ENCODE measurements at regions of chr13 and their contacts with region 1.

Region 1: GRCh38 chr13:43132257-43132656 is 108.9 kb downstream of the DNAJC15 start:
- DNase-seq: peak in 1 of 2 experiments; percentile 27
- H3K4me3 ChIP-seq: no peak overlapping the region
- H3K27ac ChIP-seq: no peak overlapping the region
- H3K4me1 ChIP-seq: peaks cover 2 to 13% (median 6%) of the 10 kb centered on the region in 4 experiments; a peak in 5 of 7 replicates
- H3K27me3 ChIP-seq: no peaks in the 10 kb centered on the region; a peak in 1 of 7 replicates
- CTCF ChIP-seq: peak; percentile 24 to 93 (median 70)
- EP300 ChIP-seq: no peak
- POLR2A ChIP-seq: no peak
- RAD21 ChIP-seq: peak; percentile 88 to 92

Region 2: DNA sequence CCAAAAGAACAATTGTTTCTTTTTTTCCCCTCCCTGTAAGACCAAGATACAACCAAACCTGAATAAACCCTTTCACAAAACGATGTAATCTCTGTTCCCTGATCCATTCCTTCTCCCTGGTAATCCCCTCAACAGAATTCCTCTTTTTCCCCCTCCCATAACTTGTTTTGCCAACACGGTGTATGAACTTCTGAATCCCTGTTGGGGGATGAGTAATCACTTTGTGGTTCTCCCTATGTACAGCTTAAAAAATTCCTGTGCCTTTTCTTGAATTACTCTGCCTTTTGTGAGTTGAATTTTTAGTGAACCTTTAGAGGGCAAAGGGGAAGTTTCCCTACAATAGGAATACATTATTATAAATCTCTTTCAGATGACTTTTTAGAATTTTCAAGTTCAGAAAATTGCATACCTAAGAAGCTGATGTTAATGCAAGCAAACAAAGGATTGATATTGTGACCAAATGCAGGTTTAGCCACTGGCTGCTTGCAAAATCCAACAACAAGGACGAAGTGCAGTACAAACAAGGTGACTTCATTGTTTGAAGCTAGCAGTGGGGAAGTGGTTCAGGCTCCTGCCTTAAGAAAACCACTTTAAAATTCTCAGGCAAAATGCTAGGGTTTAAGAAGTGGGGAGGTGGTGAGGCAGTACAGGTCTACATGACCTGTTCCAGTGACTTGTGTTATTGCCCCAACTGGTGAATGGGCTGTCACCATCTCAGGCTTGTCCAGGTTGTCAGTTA is 125.2 kb before region 1 on chr13:
- CTCF ChIA-PET with region 1: no interaction called
- POLR2A ChIA-PET with region 1: no interaction called
- DNase-seq: no peak
- H3K4me3 ChIP-seq: no peak overlapping the region
- H3K27ac ChIP-seq: no peak overlapping the region
- H3K4me1 ChIP-seq: peaks cover 0 to 4% (median 0%) of the 10 kb centered on the region in 4 experiments; a peak in 2 of 7 replicates
- H3K27me3 ChIP-seq: no peaks in the 10 kb centered on the region
- CTCF ChIP-seq: no peak
- EP300 ChIP-seq: no peak
- POLR2A ChIP-seq: no peak
- RAD21 ChIP-seq: no peak

Region 3: GRCh38 chr13:43143591-43143990 is 11.3 kb after region 1 on chr13:
- CTCF ChIA-PET with region 1: interaction called, 7 read pairs
- POLR2A ChIA-PET with region 1: interaction called, 11 read pairs
- DNase-seq: no peak
- H3K4me3 ChIP-seq: no peak overlapping the region
- H3K27ac ChIP-seq: no peak overlapping the region
- H3K4me1 ChIP-seq: peaks cover 0 to 5% (median 4%) of the 10 kb centered on the region in 4 experiments; a peak in 4 of 7 replicates
- H3K27me3 ChIP-seq: no peaks in the 10 kb centered on the region
- CTCF ChIP-seq: no peak
- EP300 ChIP-seq: no peak
- POLR2A ChIP-seq: no peak
- RAD21 ChIP-seq: no peak

Measured in H1 (cell line).